Thyroid gland (tissue), 4 donors: ENCODE measurements at regions of chr20 and their contacts with region 1.

Region 1: GRCh38 chr20:34111702-34112599 is at the start of gene EIF2S2:
- DNase-seq: peak; percentile 95 to 96
- H3K4me3 ChIP-seq: peak within 1 kb of the TSS; percentile 64 to 99 (median 69)
- H3K27ac ChIP-seq: peak within 1 kb of the TSS; percentile 84 to 96 (median 96)
- H3K4me1 ChIP-seq: peaks cover 12 to 21% of the 10 kb centered on the region in 2 donors
- H3K27me3 ChIP-seq: no peaks in the 10 kb centered on the region
- CTCF ChIP-seq: peak in 1 of 6 experiments; percentile 3
- POLR2A ChIP-seq: peak; percentile 86 to 97
- total RNA-seq, gene EIF2S2: 34.1 to 50.5 (median 42.6) TPM

Region 2: DNA sequence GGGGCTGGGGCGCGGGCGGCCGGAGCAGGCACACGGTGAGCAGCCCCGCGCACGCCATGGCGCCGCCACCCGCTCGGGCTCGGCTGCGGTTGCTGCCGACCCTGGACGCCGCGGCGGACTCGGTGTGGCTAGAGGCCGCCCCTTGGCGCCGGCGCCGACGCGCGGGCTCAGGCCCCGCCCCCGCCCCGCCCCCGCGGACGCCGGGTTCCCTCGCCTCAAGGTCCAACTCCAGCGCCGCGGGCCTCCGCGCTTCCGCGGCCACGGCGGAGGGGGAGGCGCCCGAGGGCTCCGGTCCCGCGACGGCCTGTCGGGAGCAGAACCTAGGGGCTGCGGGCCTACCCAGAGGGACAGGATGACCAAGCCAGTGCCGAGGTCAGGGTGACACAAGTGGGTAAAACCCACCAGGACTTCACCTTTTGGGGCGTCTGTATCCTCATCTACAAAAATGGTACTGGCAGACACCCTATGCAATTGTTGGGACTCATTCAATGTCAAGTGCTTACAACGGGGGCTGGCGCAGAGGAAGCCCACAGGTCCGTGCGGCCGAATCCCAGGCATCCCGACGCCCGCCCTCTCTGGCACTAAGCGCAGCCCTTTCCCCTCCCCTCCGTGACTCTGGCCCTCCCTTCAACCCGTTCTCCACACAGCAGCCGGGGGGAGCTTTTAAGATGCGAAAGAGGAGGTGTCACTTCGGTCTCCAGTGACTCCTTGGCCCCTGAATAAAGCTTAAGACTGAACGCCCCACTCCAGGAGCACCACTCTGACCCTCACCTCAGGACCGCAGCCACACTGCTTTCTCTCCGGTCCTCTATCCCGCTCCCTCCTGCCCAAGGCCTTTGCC is 437.4 kb before region 1 on chr20 and contains the start of gene NECAB3:
- intact Hi-C with region 1: loop called (anchors 10 kb)
- DNase-seq: peak; percentile 84 to 88
- H3K4me3 ChIP-seq: peak within 1 kb of the TSS; percentile 51 to 76 (median 72)
- H3K27ac ChIP-seq: peak within 1 kb of the TSS; percentile 81 to 85 (median 84)
- H3K4me1 ChIP-seq: peaks cover 17 to 30% of the 10 kb centered on the region in 2 donors
- H3K27me3 ChIP-seq: no peaks in the 10 kb centered on the region
- CTCF ChIP-seq: no peak
- POLR2A ChIP-seq: peak; percentile 20 to 85
- total RNA-seq, gene NECAB3: 65.2 to 99.8 (median 73.4) TPM

Region 3: GRCh38 chr20:33803921-33804337 is 308.0 kb before region 1 on chr20:
- intact Hi-C with region 1: loop called (anchors 10 kb)
- DNase-seq: no peak
- H3K4me3 ChIP-seq: no peak overlapping the region
- H3K27ac ChIP-seq: no peak overlapping the region
- H3K4me1 ChIP-seq: no peaks in the 10 kb centered on the region
- H3K27me3 ChIP-seq: no peaks in the 10 kb centered on the region
- CTCF ChIP-seq: no peak
- POLR2A ChIP-seq: no peak

Region 4: DNA sequence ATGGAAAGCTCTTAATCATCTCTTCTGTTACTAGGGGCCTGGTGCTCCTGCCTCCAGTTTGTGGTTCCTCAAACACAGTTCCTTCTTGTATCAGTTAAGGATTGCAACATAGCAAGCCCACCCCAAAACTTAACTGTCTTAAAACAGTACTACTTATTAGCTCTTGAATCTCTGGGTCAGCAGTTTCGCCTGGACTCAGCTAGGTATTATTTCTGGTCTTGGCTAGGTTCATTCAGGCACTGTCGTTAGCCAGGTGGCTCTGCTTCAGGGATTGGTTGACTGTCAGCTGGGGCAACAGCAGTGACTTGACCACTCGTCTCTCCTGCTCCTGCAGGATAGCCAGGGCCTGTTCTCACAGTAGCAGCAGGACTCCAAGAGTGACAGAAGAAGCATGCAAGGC is 148.2 kb before region 1 on chr20:
- intact Hi-C with region 1: no loop called
- DNase-seq: no peak
- H3K4me3 ChIP-seq: no peak overlapping the region
- H3K27ac ChIP-seq: no peak overlapping the region
- H3K4me1 ChIP-seq: no peaks in the 10 kb centered on the region
- H3K27me3 ChIP-seq: no peaks in the 10 kb centered on the region
- CTCF ChIP-seq: no peak
- POLR2A ChIP-seq: no peak